Activated CD4-positive, alpha-beta T cell treated with anti-CD3 and anti-CD28 coated beads, Interleukin-2, amount 10 ng/mL, durations not matched to agents 24 days and 14 days (primary cell): ENCODE measurements at regions of chr9 and their contacts with region 1.

Region 1: DNA sequence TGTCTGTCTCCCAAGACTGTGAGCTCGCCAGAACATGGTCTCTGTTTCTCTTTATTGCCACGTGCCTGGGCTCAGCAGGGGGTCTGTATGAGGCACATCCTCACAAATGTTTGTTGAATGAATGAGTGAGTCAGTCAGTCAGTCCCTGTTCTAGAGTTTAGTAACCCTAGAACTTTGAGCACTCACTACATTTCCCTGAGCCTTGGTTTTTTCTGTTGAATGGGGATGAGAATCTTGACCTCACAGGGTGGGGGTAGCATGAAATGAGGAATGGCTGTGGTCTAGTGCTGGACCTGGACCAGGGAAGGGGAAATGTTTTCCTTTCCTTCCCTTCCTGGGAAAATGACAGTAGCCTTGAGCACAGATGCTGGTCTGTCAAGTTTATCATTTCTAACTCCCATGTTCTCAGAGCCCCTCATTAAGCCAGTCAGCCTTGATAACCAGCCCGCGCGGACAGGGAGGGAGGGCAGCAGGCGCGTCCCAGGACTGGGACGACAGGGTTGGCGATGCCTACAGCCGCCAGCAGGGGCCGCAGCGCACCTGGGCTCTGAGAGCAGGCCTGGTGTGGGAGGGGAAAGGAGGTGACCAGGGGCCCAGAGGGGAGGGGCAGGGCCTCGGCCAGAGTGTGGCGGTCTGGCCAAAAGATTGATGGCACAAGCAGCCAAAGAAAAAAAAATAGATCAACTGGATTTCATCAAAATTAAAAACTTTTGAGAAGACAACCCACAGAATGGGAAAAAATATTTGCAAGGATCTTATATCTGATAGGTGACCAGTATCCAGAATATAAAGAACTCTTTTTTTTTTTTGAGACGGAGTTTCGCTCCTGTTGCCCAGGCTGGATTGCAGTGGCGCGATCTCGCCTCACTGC is 24.1 kb upstream of the WNK2 start:
- DNase-seq: peak; percentile 93
- H3K4me3 Mint-ChIP-seq: no peak overlapping the region
- H3K27ac Mint-ChIP-seq: peak overlapping the region; percentile 73
- H3K4me1 Mint-ChIP-seq: peaks cover 21% of the 10 kb centered on the region
- H3K27me3 Mint-ChIP-seq: no peaks in the 10 kb centered on the region

Region 2: GRCh38 chr9:93134015-93134739 is 25.7 kb before region 1 on chr9 and contains the start of gene NINJ1:
- intact Hi-C with region 1: loop called (anchors 1 kb)
- DNase-seq: peak; percentile 97
- H3K4me3 Mint-ChIP-seq: peak within 1 kb of the TSS; percentile 93
- H3K27ac Mint-ChIP-seq: peak within 1 kb of the TSS; percentile 97
- H3K4me1 Mint-ChIP-seq: peaks cover 60% of the 10 kb centered on the region
- H3K27me3 Mint-ChIP-seq: no peaks in the 10 kb centered on the region
- total RNA-seq, gene NINJ1: 103 and 110 TPM in 2 replicates

Region 3: DNA sequence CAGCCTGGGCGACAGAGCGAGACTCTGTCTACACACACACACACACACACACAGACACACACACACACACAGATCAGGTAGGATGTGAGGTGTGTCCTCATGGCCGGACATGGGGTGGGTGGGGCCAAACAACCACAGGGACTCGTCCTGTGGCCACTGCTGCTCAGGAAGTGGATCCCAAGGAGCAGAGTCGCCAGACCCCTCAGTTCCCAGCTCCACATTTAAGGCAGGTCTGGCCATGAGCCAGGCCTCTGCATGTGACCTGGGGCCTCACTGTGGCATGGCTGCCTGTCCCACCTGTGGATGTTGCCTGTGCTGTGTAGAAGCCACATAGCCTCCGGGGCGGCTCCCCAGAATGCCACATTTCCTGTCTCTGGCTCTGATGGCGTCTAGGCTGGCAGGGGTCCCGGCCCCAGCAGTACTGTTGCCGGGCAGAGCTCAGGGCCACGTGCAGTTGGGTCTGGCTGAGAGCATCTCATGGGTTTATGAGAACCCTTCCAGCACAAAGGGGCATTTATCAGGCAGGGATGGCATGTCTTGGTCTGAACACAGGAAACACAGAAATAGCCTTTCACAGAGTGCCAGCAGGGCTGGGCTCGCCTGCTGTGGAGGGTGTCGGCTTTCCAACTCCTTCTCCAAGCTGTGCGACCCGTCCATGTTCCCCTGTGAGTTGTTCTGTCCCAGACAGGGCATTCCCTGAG is 15.9 kb before region 1 on chr9:
- intact Hi-C with region 1: loop called (anchors 1 kb)
- DNase-seq: peak; percentile 85
- H3K4me3 Mint-ChIP-seq: peak overlapping the region; percentile 60
- H3K27ac Mint-ChIP-seq: peak overlapping the region; percentile 96
- H3K4me1 Mint-ChIP-seq: peaks cover 41% of the 10 kb centered on the region
- H3K27me3 Mint-ChIP-seq: no peaks in the 10 kb centered on the region

Region 4: GRCh38 chr9:93302551-93303257 is 142.9 kb after region 1 on chr9:
- intact Hi-C with region 1: loop called (anchors 1 kb)
- DNase-seq: peak; percentile 85
- H3K4me3 Mint-ChIP-seq: no peak overlapping the region
- H3K27ac Mint-ChIP-seq: no peak overlapping the region
- H3K4me1 Mint-ChIP-seq: peaks cover 6% of the 10 kb centered on the region
- H3K27me3 Mint-ChIP-seq: no peaks in the 10 kb centered on the region

Region 5: DNA sequence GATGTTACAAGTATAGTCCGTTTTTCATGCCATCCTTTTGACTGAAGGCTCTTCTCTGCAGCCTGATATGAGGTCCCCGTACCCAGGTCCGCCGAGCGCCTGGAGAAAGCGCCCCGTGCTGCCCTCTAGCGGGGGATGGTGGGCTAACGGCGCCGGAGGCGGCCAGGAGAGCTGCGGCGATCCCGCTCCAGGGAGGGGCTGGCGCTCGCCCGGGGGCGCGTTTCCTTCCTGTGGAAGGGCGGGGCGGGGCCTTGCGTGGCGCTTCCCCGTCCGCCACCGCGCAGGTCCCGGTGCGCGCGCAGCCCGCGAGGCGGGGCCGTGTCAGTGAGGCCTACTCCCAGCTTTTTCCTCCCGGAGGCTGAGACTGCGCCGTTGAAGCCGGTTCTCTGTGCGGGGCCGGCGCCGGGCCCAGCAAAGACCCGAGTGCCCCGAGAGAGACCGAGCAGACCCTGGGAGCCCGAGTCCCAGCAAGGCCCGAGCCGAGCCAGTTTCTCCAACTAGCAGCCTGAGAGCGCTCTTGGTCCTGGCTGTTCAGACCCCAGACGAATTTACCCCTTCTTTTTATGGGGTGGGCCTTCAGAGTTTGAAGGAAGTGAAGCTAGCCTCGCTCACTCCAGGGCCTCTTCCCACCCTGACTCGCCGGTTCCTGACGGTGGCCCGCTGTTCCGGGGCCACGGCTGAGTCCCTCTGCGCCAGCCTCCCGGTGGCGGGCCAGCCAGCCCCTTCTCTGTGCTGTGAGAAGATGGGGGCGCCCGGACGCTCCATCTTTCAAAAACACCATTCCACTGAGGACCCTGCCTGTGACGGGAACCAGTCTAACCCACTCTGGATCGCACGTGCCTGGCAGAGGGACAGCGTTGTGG is 406.8 kb after region 1 on chr9:
- intact Hi-C with region 1: loop called (anchors 5 kb)
- DNase-seq: peak; percentile 100
- H3K4me3 Mint-ChIP-seq: peak overlapping the region; percentile 89
- H3K27ac Mint-ChIP-seq: peak overlapping the region; percentile 93
- H3K4me1 Mint-ChIP-seq: peaks cover 20% of the 10 kb centered on the region
- H3K27me3 Mint-ChIP-seq: no peaks in the 10 kb centered on the region